H1 (cell line): ENCODE measurements at regions of chr1 and their contacts with region 1.

Region 1: GRCh38 chr1:55848906-55849305 is 633.7 kb upstream of the USP24 start:
- DNase-seq: peak in 1 of 2 experiments; percentile 21
- H3K4me3 ChIP-seq: no peak overlapping the region
- H3K27ac ChIP-seq: no peak overlapping the region
- H3K4me1 ChIP-seq: no peaks in the 10 kb centered on the region
- H3K27me3 ChIP-seq: no peaks in the 10 kb centered on the region
- CTCF ChIP-seq: peak; percentile 24 to 65 (median 56)
- EP300 ChIP-seq: no peak
- POLR2A ChIP-seq: no peak
- RAD21 ChIP-seq: peak; percentile 77 to 84

Region 2: GRCh38 chr1:55478742-55479141 is 370.2 kb before region 1 on chr1:
- CTCF ChIA-PET with region 1: interaction called, 14 read pairs
- POLR2A ChIA-PET with region 1: no interaction called
- DNase-seq: no peak
- H3K4me3 ChIP-seq: no peak overlapping the region
- H3K27ac ChIP-seq: no peak overlapping the region
- H3K4me1 ChIP-seq: no peaks in the 10 kb centered on the region
- H3K27me3 ChIP-seq: no peaks in the 10 kb centered on the region
- CTCF ChIP-seq: no peak; a peak in 1 of 4 replicates
- EP300 ChIP-seq: no peak
- POLR2A ChIP-seq: no peak
- RAD21 ChIP-seq: peak; percentile 57 to 61

Region 3: GRCh38 chr1:55860798-55861519 is 12.1 kb after region 1 on chr1:
- CTCF ChIA-PET with region 1: interaction called, 53 read pairs
- POLR2A ChIA-PET with region 1: no interaction called
- DNase-seq: peak; percentile 3 to 51
- H3K4me3 ChIP-seq: no peak overlapping the region
- H3K27ac ChIP-seq: no peak overlapping the region
- H3K4me1 ChIP-seq: no peaks in the 10 kb centered on the region
- H3K27me3 ChIP-seq: no peaks in the 10 kb centered on the region
- CTCF ChIP-seq: peak; percentile 49 to 67 (median 65)
- EP300 ChIP-seq: no peak
- POLR2A ChIP-seq: no peak
- RAD21 ChIP-seq: peak; percentile 86 to 90